Lower lobe of right lung (tissue), 2 donors: ENCODE measurements at regions of chr15 and their contacts with region 1.

Region 1: DNA sequence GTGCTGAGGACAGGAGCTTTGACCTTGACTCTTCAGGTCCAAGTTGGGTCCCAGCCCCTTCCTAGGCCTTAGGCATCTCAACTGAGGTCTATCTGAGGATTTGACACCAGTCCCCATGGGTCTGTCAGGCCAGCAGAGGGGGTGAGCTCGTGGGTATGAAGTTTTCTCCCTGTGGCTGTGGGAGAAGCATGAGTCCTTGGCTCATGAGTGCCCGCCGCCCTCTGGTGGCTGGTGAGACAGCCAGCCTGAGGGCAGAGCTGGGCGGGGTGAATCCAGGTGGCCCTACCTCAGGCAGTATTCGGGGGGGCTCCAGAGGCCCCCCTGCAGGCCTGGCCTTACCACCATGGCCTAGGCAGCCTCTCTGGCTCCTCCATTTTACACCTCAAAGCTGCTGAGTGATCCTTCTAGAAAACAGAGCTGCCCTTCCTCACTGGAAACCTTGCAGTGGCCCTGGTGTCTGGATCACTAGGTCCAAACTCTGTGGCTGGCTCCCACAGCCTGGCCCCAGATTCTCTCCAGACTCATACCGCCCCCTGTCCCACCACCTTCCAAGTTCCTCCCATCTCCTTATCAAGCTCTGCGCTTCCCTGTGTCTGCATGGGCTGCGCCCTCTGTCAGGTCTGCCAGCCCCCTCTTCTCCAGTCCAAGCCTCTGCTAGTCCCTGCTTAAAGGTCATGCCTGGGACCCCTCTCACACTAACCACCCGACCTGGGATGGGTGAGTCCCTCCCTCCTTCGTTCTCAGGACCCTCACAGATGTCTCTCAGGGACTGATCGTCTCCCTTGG is 16.1 kb downstream of the SH2D7 start:
- DNase-seq: peak; percentile 91
- ATAC-seq: peak; percentile 92
- H3K4me3 ChIP-seq: no peak overlapping the region
- H3K27ac ChIP-seq: no peak overlapping the region
- H3K4me1 ChIP-seq: peaks cover 17% of the 10 kb centered on the region
- H3K27me3 ChIP-seq: no peaks in the 10 kb centered on the region
- CTCF ChIP-seq: peak; percentile 97

Region 2: GRCh38 chr15:77966540-77967290 is 141.8 kb before region 1 on chr15:
- intact Hi-C with region 1: loop called (anchors 5 kb)
- DNase-seq: no peak
- ATAC-seq: peak; percentile 85 to 86
- H3K4me3 ChIP-seq: no peak overlapping the region
- H3K27ac ChIP-seq: no peak overlapping the region
- H3K4me1 ChIP-seq: no peaks in the 10 kb centered on the region
- H3K27me3 ChIP-seq: no peaks in the 10 kb centered on the region
- CTCF ChIP-seq: peak; percentile 85

Region 3: DNA sequence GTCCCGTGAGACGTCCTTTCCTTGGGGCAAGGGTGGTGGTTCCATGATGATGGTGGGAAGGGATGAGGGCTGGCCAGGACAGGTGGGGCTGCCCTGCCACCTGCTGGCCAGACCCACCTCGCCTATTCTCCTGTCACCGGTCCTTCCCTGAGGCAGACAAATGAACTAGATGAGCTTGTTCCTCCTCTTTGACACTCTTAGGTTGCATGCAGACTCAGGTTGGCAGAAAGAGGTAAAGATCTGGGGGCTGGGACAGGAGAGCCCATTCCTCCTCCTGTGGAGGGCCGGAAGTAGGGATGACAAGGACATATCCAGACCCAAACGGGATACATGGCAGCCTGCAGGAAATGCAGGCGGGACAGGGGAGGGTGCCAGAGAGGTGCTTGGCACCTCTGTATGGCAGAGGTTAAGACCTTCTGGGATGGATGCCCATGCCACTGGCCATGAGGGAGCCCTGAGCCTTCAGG is 87.3 kb after region 1 on chr15:
- intact Hi-C with region 1: loop called (anchors 10 kb)
- DNase-seq: no peak
- ATAC-seq: peak; percentile 78 to 88
- H3K4me3 ChIP-seq: no peak overlapping the region
- H3K27ac ChIP-seq: no peak overlapping the region
- H3K4me1 ChIP-seq: no peaks in the 10 kb centered on the region
- H3K27me3 ChIP-seq: no peaks in the 10 kb centered on the region
- CTCF ChIP-seq: peak; percentile 82